ENCODE measurements at regions of chr19 and their contacts with region 1.

Region 1: GRCh38 chr19:28878862-28879566 is 333.9 kb downstream of the UQCRFS1 start:
- DNase-seq: no peak
- H3K4me3 ChIP-seq: no peak overlapping the region
- CTCF ChIP-seq: peak; percentile 39

Region 2: GRCh38 chr19:27966390-27966816 is 912.6 kb before region 1 on chr19:
- CTCF ChIA-PET with region 1: interaction called, 11 read pairs
- POLR2A ChIA-PET with region 1: no interaction called
- DNase-seq: no peak
- H3K4me3 ChIP-seq: no peak overlapping the region
- CTCF ChIP-seq: peak; percentile 27

Region 3: DNA sequence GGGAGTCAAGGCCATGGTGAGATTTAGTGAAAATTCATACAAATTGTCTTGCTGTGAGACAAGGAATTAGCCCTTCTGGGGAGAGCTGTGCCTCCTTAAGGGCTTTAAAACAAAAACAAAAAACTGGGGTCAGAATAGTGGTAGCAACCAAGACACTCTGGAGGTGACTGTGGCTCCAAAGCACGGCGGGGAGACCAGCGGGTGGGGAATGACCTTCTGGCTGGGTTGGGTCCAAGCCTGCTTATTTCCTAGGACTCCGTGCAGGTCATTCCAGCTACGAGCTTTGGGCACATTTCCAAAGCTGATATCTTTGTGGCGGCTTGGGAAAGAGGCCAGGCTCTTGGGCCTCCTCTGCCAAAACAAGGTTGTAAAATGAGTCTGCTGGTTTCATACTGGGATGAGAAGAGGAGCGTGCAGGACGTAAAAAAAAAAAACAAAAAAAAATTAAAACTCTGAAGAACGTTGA is 14.4 kb before region 1 on chr19:
- CTCF ChIA-PET with region 1: interaction called, 19 read pairs
- POLR2A ChIA-PET with region 1: no interaction called
- DNase-seq: no peak
- H3K4me3 ChIP-seq: no peak overlapping the region
- CTCF ChIP-seq: no peak

Region 4: DNA sequence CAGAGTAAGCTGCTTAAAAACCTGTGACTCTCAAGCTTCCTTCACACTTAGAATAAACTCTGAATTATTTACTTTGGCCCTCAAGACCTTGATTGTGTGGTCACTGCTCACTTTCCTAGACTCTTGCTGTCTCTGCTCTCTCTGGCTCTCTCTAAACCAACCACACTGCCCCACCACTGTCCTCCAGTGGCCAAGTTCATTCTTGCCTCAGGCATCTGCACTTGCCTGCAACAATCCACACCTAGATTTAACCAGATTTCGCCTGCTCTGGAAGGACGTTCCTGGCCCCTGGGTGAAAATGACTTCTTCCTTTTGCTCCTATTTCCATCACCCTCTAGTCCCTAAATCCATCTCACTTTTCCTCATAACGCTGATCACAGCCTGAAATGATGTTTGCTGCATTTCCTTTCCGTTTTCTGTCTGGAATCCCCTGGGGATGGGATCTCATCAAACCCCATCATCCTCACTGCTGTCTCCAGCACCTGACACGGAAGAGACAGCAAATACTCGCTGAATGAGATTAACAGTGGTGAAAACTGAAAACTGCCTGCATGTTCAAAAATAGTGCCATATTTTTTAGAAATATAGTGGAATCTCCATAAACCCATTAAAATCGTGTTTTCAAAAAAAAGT is 101.3 kb after region 1 on chr19:
- CTCF ChIA-PET with region 1: interaction called, 23 read pairs
- POLR2A ChIA-PET with region 1: no interaction called
- DNase-seq: no peak
- H3K4me3 ChIP-seq: no peak overlapping the region
- CTCF ChIP-seq: peak; percentile 73